Activated CD4-positive, alpha-beta memory T cell treated with anti-CD3 and anti-CD28 coated beads for 36 hours (primary cell): ENCODE measurements at regions of chr18 and their contacts with region 1.

Region 1: GRCh38 chr18:10361660-10362059 is 92.8 kb upstream of the APCDD1 start:
- DNase-seq: no peak
- H3K4me3 Mint-ChIP-seq: no peak overlapping the region
- H3K27ac Mint-ChIP-seq: no peak overlapping the region
- H3K4me1 Mint-ChIP-seq: no peaks in the 10 kb centered on the region
- H3K27me3 Mint-ChIP-seq: peaks cover 4% of the 10 kb centered on the region

Region 2: DNA sequence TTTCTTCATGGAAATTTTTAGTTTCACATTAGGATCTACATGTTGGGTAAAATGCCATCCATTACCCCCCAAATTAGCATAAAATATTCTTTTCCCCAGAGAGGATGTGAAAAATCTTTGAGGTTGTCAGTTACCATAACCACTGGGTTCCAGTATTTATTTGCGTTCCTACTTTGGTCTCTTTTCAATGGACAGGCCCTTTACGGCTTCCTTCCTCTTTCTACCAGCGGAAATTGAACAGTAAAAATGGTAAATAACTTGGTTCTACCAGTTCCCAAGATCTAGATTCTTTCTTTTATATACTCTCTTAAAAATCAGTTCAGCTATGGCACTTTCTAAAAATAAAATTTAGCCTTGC is 76.4 kb before region 1 on chr18:
- CTCF ChIA-PET with region 1: no interaction called
- POLR2A ChIA-PET with region 1: no interaction called
- intact Hi-C with region 1: no loop called
- DNase-seq: no peak
- H3K4me3 Mint-ChIP-seq: no peak overlapping the region
- H3K27ac Mint-ChIP-seq: no peak overlapping the region
- H3K4me1 Mint-ChIP-seq: no peaks in the 10 kb centered on the region
- H3K27me3 Mint-ChIP-seq: no peaks in the 10 kb centered on the region

Region 3: DNA sequence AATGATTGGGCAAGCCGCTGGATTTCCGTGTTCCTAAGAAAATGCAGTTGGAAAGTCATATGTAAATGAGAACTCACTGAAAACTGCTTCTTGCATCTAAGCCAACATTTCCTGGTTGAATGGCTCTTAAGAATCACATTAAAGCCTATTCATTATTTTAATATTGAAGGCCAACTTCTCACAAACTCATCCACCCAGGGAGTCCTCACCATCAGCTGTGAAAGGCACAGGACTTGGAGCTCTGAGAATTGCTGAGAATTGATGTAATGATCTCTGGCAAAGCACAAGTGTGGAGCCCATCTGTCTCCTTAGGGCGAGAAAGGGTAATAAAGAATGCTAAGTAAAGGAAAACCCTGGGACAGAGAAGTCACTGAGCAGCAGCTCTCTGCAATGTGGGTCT is 36.9 kb after region 1 on chr18:
- CTCF ChIA-PET with region 1: no interaction called
- POLR2A ChIA-PET with region 1: no interaction called
- intact Hi-C with region 1: loop called (anchors 5 kb)
- DNase-seq: no peak
- H3K4me3 Mint-ChIP-seq: no peak overlapping the region
- H3K27ac Mint-ChIP-seq: no peak overlapping the region
- H3K4me1 Mint-ChIP-seq: no peaks in the 10 kb centered on the region
- H3K27me3 Mint-ChIP-seq: peaks cover 12% of the 10 kb centered on the region

Region 4: GRCh38 chr18:12236934-12237832 is 1875.5 kb after region 1 on chr18:
- CTCF ChIA-PET with region 1: no interaction called
- POLR2A ChIA-PET with region 1: no interaction called
- intact Hi-C with region 1: no loop called
- DNase-seq: peak; percentile 78
- H3K4me3 Mint-ChIP-seq: no peak overlapping the region
- H3K27ac Mint-ChIP-seq: no peak overlapping the region
- H3K4me1 Mint-ChIP-seq: no peaks in the 10 kb centered on the region
- H3K27me3 Mint-ChIP-seq: peaks cover 24% of the 10 kb centered on the region